ENCODE measurements at regions of chr6 and their contacts with region 1.

Region 1: DNA sequence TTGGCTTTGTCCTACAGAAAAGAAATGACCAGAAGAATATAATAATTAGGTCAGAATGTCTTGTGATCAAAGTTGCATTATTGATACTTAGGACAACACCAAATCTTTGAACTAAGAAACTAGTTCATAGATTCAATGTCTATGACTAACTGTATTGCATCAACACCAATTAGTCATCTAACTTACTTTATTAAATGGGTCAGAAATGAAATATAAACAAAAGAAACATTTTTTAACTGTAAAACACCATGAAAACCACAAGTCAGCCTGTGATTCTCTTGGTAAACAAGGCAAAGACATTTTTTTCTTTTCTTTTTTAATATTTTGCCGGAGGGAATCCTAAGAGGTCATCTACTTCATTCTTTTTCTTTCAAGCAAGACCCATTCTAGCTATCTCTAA is 114.2 kb upstream of the HDDC2 start:
- DNase-seq: no peak
- H3K4me3 ChIP-seq: no peak overlapping the region
- H3K27ac ChIP-seq: no peak overlapping the region
- H3K4me1 ChIP-seq: no peaks in the 10 kb centered on the region
- H3K27me3 ChIP-seq: peaks cover 3% of the 10 kb centered on the region
- CTCF ChIP-seq: no peak

Region 2: GRCh38 chr6:125273965-125274364 is 142.0 kb before region 1 on chr6:
- intact Hi-C with region 1: no loop called
- DNase-seq: peak; percentile 37
- H3K4me3 ChIP-seq: no peak overlapping the region
- H3K27ac ChIP-seq: no peak overlapping the region
- H3K4me1 ChIP-seq: no peaks in the 10 kb centered on the region
- H3K27me3 ChIP-seq: no peaks in the 10 kb centered on the region
- CTCF ChIP-seq: no peak

Region 3: GRCh38 chr6:125434760-125435159 is 18.8 kb after region 1 on chr6:
- intact Hi-C with region 1: loop called (anchors 2 kb)
- DNase-seq: no peak
- H3K4me3 ChIP-seq: no peak overlapping the region
- H3K27ac ChIP-seq: no peak overlapping the region
- H3K4me1 ChIP-seq: no peaks in the 10 kb centered on the region
- H3K27me3 ChIP-seq: no peaks in the 10 kb centered on the region
- CTCF ChIP-seq: no peak

Measured in colonic mucosa (tissue), 4 donors.